Calu3 (cell line): ENCODE measurements at regions of chr17 and their contacts with region 1.

Region 1: DNA sequence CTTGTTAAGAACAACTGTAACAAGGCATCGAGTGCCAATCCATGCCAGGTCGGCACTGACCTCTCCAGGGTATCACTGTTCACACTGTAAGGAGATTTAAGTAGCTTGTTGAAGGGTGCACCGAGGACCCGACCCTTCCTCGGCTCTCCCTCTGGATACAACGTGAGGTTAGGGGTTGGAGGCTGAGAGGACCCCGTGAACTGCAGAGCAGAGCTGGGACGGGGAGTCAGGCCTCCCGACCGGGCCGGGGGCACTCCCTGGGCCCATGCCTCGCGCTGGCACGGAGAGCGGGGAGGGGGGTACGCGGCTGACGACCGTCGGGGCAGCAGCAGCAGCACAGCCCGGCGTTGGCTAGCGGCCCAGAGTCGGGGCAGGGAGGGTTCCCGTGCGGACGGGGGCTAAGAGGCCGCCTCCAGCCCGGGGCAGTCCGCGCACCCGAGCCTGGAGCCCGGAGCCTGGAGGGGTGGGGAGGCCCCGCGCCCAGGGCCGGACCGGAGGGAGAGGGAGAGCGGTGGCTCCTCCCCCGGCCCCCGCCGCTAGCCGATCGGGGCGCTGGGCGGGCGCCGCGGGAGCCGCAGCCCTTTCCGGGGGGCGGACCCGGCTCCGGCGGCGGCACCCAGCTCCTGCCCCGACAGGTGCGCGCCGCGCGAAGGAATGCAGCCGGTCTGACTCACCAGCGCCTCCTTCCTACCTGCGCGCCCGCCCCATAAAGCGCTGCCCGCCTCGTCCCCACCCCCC is at the start of gene ITGB4:
- DNase-seq: peak; percentile 95
- H3K4me3 Mint-ChIP-seq: peak within 1 kb of the TSS; percentile 99
- H3K27ac Mint-ChIP-seq: peak within 1 kb of the TSS; percentile 93
- H3K4me1 Mint-ChIP-seq: peaks cover 23% of the 10 kb centered on the region
- H3K27me3 Mint-ChIP-seq: no peaks in the 10 kb centered on the region
- CTCF ChIP-seq: peak; percentile 14
- total RNA-seq, gene ITGB4: 253 and 301 TPM in 2 replicates

Region 2: GRCh38 chr17:75679706-75680442 is 41.0 kb before region 1 on chr17:
- CTCF ChIA-PET with region 1: interaction called, 13 read pairs
- intact Hi-C with region 1: loop called (anchors 5 kb)
- DNase-seq: peak; percentile 60
- H3K4me3 Mint-ChIP-seq: no peak overlapping the region
- H3K27ac Mint-ChIP-seq: peak overlapping the region; percentile 63
- H3K4me1 Mint-ChIP-seq: peaks cover 40% of the 10 kb centered on the region
- H3K27me3 Mint-ChIP-seq: no peaks in the 10 kb centered on the region
- CTCF ChIP-seq: no peak

Region 3: GRCh38 chr17:75684924-75685323 is 36.0 kb before region 1 on chr17:
- CTCF ChIA-PET with region 1: interaction called, 13 read pairs
- intact Hi-C with region 1: no loop called
- DNase-seq: peak; percentile 82
- H3K4me3 Mint-ChIP-seq: peak overlapping the region; percentile 50
- H3K27ac Mint-ChIP-seq: peak overlapping the region; percentile 88
- H3K4me1 Mint-ChIP-seq: peaks cover 54% of the 10 kb centered on the region
- H3K27me3 Mint-ChIP-seq: no peaks in the 10 kb centered on the region
- CTCF ChIP-seq: no peak

Region 4: GRCh38 chr17:75707131-75707571 is 13.7 kb before region 1 on chr17:
- CTCF ChIA-PET with region 1: interaction called, 17 read pairs
- intact Hi-C with region 1: no loop called
- DNase-seq: peak; percentile 78
- H3K4me3 Mint-ChIP-seq: peak overlapping the region; percentile 47
- H3K27ac Mint-ChIP-seq: peak overlapping the region; percentile 86
- H3K4me1 Mint-ChIP-seq: peaks cover 22% of the 10 kb centered on the region
- H3K27me3 Mint-ChIP-seq: no peaks in the 10 kb centered on the region
- CTCF ChIP-seq: no peak

Region 5: DNA sequence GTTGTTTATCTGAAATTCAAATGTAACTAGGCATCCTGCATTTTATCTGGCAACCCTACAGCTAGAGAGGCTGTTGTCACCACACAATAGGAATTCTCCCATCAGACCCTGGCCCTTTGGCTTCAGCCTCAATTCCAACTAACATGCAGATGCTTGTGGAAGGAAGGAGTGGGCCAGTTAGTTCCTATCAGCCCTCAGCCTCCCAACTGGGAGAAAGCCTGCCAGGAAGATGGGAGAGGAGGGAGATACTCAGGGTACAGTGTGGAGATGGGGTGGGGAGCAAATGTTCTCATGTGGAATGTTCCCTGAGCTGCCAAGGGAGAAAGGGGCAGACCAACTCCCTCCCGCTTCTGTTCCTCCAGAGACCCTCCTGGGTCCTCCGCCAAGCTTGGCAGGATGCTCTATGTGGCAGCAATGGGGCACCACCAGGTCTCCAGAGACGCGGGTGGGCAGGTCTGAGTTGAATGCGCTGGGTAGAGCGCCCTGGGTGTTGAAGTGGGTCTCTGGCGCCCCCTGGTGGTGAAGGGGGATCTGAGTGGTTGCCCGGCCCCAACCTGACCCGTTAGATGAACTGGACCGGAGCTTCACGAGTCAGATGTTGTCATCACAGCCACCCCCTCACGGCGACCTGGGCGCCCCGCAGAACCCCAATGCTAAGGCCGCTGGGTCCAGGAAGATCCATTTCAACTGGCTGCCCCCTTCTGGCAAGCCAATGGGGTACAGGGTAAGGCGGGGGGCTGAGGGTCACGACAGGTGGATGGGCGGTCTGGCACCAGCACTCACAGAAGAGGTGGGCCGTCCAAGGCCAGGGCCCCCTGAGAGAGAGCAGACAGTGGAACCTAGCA is 28.9 kb after region 1 on chr17:
- CTCF ChIA-PET with region 1: interaction called, 14 read pairs
- intact Hi-C with region 1: no loop called
- DNase-seq: peak; percentile 75
- H3K4me3 Mint-ChIP-seq: no peak overlapping the region
- H3K27ac Mint-ChIP-seq: no peak overlapping the region
- H3K4me1 Mint-ChIP-seq: peaks cover 5% of the 10 kb centered on the region
- H3K27me3 Mint-ChIP-seq: no peaks in the 10 kb centered on the region
- CTCF ChIP-seq: peak; percentile 94

Region 6: DNA sequence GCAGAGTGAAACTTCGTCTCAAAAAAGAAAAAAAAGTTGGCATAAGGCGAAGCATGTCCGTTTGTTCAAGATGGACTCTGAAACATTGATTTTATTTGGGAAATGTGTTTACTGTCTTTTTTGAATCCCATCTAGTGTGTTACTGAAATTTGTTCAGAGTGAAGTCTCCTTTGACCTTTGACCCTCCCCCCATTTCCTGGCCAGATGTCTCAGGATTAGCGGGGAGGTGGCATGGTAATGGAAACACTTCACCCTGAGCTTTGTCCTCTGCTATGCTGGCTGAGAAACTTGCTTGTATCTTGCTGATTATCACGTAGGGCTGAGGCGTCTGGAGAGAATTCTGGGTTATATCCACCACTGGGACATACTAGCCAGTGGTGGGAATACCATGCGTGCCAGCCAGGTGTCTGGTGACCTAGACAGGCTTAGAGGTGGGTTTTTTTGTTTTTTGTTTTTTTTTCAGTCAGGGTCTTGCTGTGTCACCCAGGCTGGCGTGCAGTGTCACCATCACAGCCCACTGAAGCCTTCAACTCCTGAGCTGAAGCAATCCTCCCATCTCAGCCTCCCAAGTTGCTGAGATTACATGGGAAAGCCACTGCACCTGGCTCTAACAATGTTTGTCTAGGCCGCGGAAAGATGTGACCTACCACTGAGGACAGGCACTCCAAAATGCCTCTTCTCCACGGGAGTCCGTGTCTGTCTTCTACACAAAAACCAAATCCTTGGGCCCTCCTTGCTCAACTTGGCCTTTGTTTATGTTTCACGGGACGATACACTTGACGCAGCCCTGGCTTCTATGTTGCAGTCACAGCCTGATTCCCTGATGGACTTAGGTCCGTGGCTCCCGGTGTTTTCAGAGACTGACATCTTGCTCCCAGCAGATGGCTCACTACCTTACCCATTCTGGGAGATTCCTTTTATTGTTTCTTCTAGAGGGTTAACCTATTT is 50.7 kb after region 1 on chr17:
- CTCF ChIA-PET with region 1: no interaction called
- intact Hi-C with region 1: no loop called
- DNase-seq: no peak
- H3K4me3 Mint-ChIP-seq: no peak overlapping the region
- H3K27ac Mint-ChIP-seq: no peak overlapping the region
- H3K4me1 Mint-ChIP-seq: peaks cover under 1% of the 10 kb centered on the region
- H3K27me3 Mint-ChIP-seq: no peaks in the 10 kb centered on the region
- CTCF ChIP-seq: no peak